PC-9 (cell line): ENCODE measurements at regions of chr5 and their contacts with region 1.

Region 1: GRCh38 chr5:31825518-31826068 is 186.7 kb downstream of the PDZD2 start:
- DNase-seq: peak in 1 of 2 experiments; percentile 53
- H3K4me3 ChIP-seq: no peak overlapping the region
- H3K27ac ChIP-seq: no peak overlapping the region
- H3K4me1 ChIP-seq: no peaks in the 10 kb centered on the region
- H3K27me3 ChIP-seq: peaks cover 57% of the 10 kb centered on the region
- CTCF ChIP-seq: peak; percentile 82

Region 2: DNA sequence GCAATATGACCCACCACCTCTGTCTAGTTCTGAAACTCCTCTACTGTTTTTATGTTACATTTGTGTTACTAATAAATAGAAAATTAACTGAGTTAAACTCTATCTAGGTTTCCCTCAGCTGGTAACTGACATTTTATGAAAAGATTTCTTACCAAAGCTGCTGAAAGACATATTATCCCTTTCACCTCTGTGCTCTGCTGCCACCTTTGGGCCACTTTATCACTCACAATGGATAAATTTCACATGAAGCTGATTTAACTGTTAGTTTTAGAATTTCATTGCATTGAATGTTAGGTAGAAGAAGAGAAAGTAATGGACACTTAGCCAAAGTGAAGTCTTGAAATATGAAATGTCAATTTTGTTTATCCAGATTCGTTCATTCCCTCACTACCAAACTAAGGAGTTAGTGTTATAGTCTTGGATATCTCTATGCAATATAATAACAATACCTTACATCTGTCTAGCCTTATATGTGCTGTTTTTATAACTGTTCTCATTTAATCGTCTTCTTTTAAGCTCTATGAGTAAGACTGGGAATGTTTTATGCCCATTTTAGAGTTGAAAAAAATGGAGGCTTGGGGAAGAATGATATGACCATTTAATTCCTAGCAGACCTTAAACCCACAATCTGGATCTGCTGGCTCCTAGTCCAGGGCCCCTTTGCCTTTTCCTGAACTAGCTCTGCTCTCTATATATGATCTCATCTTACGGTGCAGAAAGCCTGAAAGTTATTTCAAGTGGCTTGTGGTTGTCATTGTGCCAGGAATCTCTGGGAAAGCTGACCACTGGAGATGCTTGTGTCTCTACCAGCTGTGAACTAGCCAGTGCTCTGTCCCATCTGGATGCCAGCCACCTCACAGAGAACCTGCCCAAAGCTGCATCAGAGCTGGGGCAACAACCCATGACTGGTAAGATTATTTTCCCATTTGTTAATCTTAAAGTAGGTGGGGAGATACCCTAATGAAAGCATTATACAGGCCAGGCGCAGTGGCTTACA is 251.4 kb after region 1 on chr5:
- CTCF ChIA-PET with region 1: no interaction called
- POLR2A ChIA-PET with region 1: no interaction called
- intact Hi-C with region 1: loop called (anchors 1 kb)
- DNase-seq: peak; percentile 47
- H3K4me3 ChIP-seq: no peak overlapping the region
- H3K27ac ChIP-seq: no peak overlapping the region
- H3K4me1 ChIP-seq: no peaks in the 10 kb centered on the region
- H3K27me3 ChIP-seq: peaks cover 20% of the 10 kb centered on the region
- CTCF ChIP-seq: peak; percentile 90

Region 3: DNA sequence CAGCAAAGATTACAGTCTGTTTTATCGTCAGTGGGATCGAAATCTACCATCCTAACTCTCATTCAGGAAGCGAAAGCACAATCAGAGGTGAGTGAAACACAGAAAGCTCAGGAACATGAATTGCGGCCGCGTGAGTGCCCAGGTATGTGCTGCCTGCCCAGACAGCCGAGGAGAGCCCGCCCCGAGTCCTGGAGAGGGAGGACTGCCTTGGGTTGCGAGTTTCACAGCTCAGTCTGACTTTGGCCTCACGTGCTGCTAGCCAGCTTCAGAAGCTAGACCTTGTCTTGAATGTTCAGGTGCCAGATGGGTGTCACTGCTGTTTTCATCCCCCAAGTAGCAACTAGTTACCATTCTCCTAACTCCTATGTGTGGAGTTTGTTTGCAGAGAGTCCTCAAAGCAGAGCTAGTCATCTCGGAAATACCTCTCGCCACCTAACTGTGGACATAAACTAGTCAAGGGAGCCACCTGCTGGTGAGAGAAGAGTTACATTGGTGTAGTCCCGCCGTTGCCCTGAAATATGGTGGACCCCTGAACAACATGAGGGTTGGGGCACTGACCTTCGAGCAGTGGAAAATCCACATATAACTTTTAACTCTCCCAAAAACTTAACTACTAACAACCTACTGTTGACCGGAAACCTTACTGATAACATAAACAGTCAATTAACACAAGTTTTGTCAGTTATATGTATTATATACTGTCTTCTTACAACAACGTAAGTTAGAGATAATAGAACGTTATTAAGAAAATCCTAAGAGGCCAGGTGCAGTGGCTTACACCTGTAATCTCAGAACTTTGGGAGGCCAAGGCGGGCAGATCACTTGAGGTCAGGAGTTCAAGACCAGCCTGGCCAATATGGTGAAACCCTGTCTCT is 267.6 kb after region 1 on chr5:
- CTCF ChIA-PET with region 1: interaction called, 11 read pairs
- POLR2A ChIA-PET with region 1: no interaction called
- intact Hi-C with region 1: loop called (anchors 1 kb)
- DNase-seq: peak; percentile 63 to 75
- H3K4me3 ChIP-seq: no peak overlapping the region
- H3K27ac ChIP-seq: no peak overlapping the region
- H3K4me1 ChIP-seq: no peaks in the 10 kb centered on the region
- H3K27me3 ChIP-seq: no peaks in the 10 kb centered on the region
- CTCF ChIP-seq: peak; percentile 93

Region 4: DNA sequence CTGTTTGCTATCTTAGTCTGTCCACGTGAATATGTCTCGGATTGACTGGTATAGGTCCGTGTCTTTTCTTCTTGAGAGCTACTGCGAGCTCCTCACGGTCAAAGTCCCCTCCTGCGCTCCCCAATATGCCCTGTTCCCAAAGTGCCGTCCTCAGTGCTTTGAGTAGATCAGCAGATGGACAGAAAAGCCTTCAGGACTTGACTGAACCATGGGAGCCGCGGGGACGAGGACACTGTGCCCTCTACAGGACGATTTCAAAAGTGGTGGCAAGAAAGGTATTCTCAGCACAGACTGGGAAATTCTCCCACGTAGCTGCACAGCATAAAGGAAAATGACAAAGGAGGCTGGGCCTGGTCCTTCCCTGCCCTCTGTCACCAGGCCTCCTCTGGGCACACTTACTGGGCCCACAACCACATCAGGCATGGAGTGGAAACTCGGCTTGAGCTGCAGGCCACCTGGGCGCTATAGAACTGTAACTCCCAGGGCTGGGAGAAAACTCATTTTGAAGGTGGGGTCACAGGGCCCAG is 503.8 kb after region 1 on chr5:
- CTCF ChIA-PET with region 1: interaction called, 5 read pairs
- POLR2A ChIA-PET with region 1: no interaction called
- intact Hi-C with region 1: loop called (anchors 1 kb)
- DNase-seq: peak; percentile 60 to 72
- H3K4me3 ChIP-seq: no peak overlapping the region
- H3K27ac ChIP-seq: no peak overlapping the region
- H3K4me1 ChIP-seq: peaks cover 14% of the 10 kb centered on the region
- H3K27me3 ChIP-seq: no peaks in the 10 kb centered on the region
- CTCF ChIP-seq: peak; percentile 83

Region 5: DNA sequence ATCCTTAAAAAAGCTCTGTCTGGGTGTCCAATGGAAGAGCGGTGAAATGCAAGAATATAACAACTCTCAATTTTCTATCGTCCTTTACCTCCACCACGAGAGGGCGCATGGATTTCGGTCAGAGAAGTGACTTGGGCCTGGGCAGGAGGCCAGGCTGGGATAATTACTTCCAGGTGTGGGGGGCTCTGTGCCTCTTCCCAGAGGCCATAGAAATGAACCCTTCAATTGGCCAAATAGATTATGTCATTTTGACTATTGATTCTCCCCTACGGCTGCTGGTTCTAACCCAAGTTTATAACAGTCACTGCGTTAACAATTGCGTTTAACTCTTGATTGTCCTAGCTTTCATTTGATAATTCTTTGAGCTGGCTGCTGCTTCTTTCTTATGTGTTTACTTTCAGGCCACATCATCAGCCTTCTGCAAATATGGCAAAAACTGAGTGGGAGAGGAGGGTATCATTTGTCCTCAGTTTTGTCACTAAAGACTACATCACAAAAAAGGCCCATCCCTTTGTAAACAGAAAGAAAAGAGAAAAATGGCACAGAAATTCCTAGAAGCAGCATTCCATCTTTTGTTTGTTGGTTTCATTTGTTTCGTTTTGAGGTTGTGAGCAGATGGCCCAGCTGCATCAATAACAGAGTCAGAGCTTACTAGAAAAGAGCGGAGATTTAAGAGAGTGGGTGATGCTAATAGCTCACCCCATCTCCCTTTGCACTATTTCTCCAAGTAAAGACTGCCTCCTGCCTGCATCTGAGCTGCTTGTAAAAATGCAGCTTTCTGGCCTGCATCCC is 664.4 kb after region 1 on chr5:
- CTCF ChIA-PET with region 1: no interaction called
- POLR2A ChIA-PET with region 1: no interaction called
- intact Hi-C with region 1: loop called (anchors 10 kb)
- DNase-seq: peak; percentile 58 to 67
- H3K4me3 ChIP-seq: no peak overlapping the region
- H3K27ac ChIP-seq: no peak overlapping the region
- H3K4me1 ChIP-seq: no peaks in the 10 kb centered on the region
- H3K27me3 ChIP-seq: no peaks in the 10 kb centered on the region
- CTCF ChIP-seq: peak; percentile 92

Region 6: GRCh38 chr5:32613050-32613672 is 787.6 kb after region 1 on chr5:
- CTCF ChIA-PET with region 1: no interaction called
- POLR2A ChIA-PET with region 1: no interaction called
- intact Hi-C with region 1: loop called (anchors 1 kb)
- DNase-seq: peak; percentile 62 to 86
- H3K4me3 ChIP-seq: no peak overlapping the region
- H3K27ac ChIP-seq: no peak overlapping the region
- H3K4me1 ChIP-seq: no peaks in the 10 kb centered on the region
- H3K27me3 ChIP-seq: no peaks in the 10 kb centered on the region
- CTCF ChIP-seq: peak; percentile 100

Region 7: DNA sequence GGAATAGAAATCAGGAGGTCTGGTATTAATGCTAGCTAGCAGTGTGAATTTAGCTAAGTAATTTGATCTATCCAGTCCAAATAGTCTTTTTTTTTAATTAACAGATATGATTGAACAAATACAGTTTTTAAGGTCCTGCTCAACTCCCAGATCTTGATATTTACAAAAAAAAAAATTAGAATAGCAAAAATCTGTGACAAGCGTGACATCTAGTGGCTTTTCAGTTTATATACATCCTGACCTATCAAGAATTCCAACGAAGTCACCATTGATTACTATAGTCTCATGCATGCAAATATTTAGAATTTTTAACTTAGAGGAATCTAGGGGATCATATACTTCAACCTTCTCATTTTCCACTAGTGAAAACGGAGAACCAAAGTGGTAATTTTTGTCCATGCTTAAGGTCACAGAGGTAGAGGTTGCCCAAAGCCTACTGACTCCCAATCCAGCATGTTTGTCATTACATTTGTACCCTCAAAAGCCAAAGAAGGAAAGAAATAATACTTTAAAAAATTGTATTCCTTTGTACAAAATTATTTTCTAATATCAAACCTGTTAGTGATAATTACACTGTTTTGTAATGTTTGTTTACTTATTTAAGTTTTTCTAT is 1597.5 kb after region 1 on chr5:
- CTCF ChIA-PET with region 1: no interaction called
- POLR2A ChIA-PET with region 1: no interaction called
- intact Hi-C with region 1: loop called (anchors 2 kb)
- DNase-seq: no peak
- H3K4me3 ChIP-seq: no peak overlapping the region
- H3K27ac ChIP-seq: no peak overlapping the region
- H3K4me1 ChIP-seq: no peaks in the 10 kb centered on the region
- H3K27me3 ChIP-seq: no peaks in the 10 kb centered on the region
- CTCF ChIP-seq: peak; percentile 84